ENCODE measurements at regions of chr14 and their contacts with region 1.

Region 1: GRCh38 chr14:91947471-91948184 is at the start of gene FBLN5:
- DNase-seq: peak in 1 of 2 donors; percentile 82
- H3K4me3 ChIP-seq: peak within 1 kb of the TSS; percentile 53 to 75
- H3K27ac ChIP-seq: peak within 1 kb of the TSS; percentile 79 to 89
- H3K4me1 ChIP-seq: peaks cover 7 to 17% of the 10 kb centered on the region in 2 donors
- H3K27me3 ChIP-seq: no peaks in the 10 kb centered on the region
- CTCF ChIP-seq: no peak
- total RNA-seq, gene FBLN5: 280 TPM

Region 2: GRCh38 chr14:91836119-91836881 is 111.3 kb before region 1 on chr14:
- intact Hi-C with region 1: loop called (anchors 2 kb)
- DNase-seq: peak; percentile 39 to 92
- H3K4me3 ChIP-seq: peak overlapping the region; percentile 75 to 80
- H3K27ac ChIP-seq: peak overlapping the region; percentile 91 to 93
- H3K4me1 ChIP-seq: peaks cover 0 to 9% of the 10 kb centered on the region in 2 donors
- H3K27me3 ChIP-seq: no peaks in the 10 kb centered on the region
- CTCF ChIP-seq: no peak

Region 3: GRCh38 chr14:91980127-91980741 is 32.6 kb after region 1 on chr14:
- intact Hi-C with region 1: loop called (anchors 2 kb)
- DNase-seq: no peak
- H3K4me3 ChIP-seq: no peak overlapping the region
- H3K27ac ChIP-seq: peak overlapping the region; percentile 45 to 62
- H3K4me1 ChIP-seq: peaks cover 11 to 49% of the 10 kb centered on the region in 2 donors
- H3K27me3 ChIP-seq: no peaks in the 10 kb centered on the region
- CTCF ChIP-seq: no peak

Region 4: DNA sequence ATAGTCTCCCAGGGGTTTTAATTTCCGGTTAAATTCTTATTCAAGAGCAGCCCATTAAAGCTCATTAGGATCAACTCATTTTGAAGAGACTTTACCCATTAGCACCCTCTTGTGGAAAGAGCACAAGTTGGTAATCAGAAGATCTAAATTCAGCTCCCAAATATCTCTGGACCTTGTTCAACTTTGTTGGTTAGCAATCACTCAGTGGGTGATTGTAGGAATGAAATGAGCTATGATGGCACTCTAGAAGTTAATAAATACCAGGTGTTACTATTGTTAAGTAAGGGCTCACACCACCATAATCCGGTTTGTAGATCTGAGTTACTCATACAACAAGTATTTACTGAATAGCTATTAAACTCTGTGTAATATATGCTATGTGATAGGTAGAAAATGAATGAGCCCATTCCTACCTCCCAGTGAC is 49.3 kb after region 1 on chr14:
- intact Hi-C with region 1: loop called (anchors 2 kb)
- DNase-seq: no peak
- H3K4me3 ChIP-seq: no peak overlapping the region
- H3K27ac ChIP-seq: peak overlapping the region in 1 of 2 donors; percentile 63
- H3K4me1 ChIP-seq: peaks cover 0 to 9% of the 10 kb centered on the region in 2 donors
- H3K27me3 ChIP-seq: no peaks in the 10 kb centered on the region
- CTCF ChIP-seq: peak; percentile 31 to 74 (median 61)

Measured in ascending aorta (tissue), 2 donors.